ENCODE measurements at regions of chr7 and their contacts with region 1.

Region 1: DNA sequence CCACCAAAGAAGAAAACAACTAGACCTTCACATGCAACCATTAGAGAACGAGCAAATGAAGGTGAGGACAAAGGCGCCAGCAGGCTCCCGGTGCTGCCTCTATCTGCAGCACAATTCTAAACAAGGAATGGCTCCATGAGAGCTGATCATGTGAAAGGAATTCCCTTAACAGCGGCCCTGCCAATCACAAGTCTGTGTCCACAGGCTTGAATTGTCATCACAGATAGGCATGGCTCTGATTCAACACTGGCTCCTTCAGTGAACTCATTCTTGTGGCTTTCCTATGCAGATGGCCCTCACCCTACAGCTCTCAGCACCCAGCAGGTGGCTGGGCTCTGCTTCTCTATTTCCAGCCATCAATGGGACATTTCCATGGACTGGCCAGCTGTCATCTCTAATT is 36.2 kb downstream of the LAMB1 start:
- DNase-seq: peak in 4 of 5 donors; percentile 64 to 75 (median 72)
- ATAC-seq: peak; percentile 82 to 93 (median 88)
- H3K4me3 ChIP-seq: no peak overlapping the region
- H3K27ac ChIP-seq: peak overlapping the region; percentile 6 to 84 (median 66)
- H3K4me1 ChIP-seq: peaks cover 0 to 56% (median 38%) of the 10 kb centered on the region in 12 donors
- H3K27me3 ChIP-seq: no peaks in the 10 kb centered on the region
- CTCF ChIP-seq: peak in 7 of 12 donors; percentile 7 to 43 (median 36)
- POLR2A ChIP-seq: no peak

Region 2: GRCh38 chr7:108010377-108010776 is 43.7 kb after region 1 on chr7:
- intact Hi-C with region 1: loop called in 2 of 10 experiments (anchors 2 kb)
- DNase-seq: no peak
- ATAC-seq: no peak
- H3K4me3 ChIP-seq: no peak overlapping the region
- H3K27ac ChIP-seq: peak overlapping the region in 9 of 12 donors; percentile 14 to 61 (median 43)
- H3K4me1 ChIP-seq: peaks cover 0 to 28% (median 4%) of the 10 kb centered on the region in 12 donors
- H3K27me3 ChIP-seq: no peaks in the 10 kb centered on the region
- CTCF ChIP-seq: no peak
- POLR2A ChIP-seq: no peak

Region 3: GRCh38 chr7:108020585-108020984 is 53.9 kb after region 1 on chr7:
- intact Hi-C with region 1: no loop called
- DNase-seq: no peak
- ATAC-seq: peak in 1 of 4 donors; percentile 10
- H3K4me3 ChIP-seq: no peak overlapping the region
- H3K27ac ChIP-seq: no peak overlapping the region
- H3K4me1 ChIP-seq: peaks cover 0 to 12% (median 0%) of the 10 kb centered on the region in 12 donors
- H3K27me3 ChIP-seq: no peaks in the 10 kb centered on the region
- CTCF ChIP-seq: no peak
- POLR2A ChIP-seq: no peak

Region 4: DNA sequence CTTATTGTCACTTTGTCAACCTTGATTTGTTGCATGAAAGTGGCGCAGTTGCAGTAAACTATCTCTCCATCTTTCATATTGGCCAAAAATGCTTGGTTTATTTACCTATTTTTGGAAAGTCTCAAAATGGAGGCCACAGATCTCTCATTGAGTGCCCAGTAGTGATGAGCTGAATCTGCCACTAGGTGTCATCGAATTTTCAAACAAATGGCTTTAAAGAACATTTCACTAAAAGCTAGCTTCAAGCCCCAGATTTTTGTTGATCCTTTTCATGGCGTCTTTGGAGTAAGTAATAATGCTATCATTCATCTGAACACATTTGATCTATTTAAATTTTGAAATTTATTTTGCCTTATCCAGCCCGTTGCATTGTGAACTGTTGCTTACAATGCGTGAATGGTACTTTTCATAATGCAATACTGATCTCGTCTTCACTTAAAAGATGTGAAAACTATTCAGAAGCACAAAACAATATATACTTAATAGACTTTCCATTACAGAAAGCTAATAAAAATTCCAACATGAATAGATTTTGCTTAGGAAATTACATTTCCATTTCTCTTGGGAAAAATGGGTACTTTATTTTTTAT is 839.2 kb after region 1 on chr7:
- intact Hi-C with region 1: no loop called
- DNase-seq: no peak
- ATAC-seq: no peak
- H3K4me3 ChIP-seq: no peak overlapping the region
- H3K27ac ChIP-seq: no peak overlapping the region
- H3K4me1 ChIP-seq: no peaks in the 10 kb centered on the region
- H3K27me3 ChIP-seq: no peaks in the 10 kb centered on the region
- CTCF ChIP-seq: peak in 8 of 12 donors; percentile 6 to 43 (median 26)
- POLR2A ChIP-seq: no peak